CD8-positive, alpha-beta T cell (primary cell): ENCODE measurements at regions of chr18 and their contacts with region 1.

Region 1: GRCh38 chr18:50819728-50820378 is at the start of gene MRO:
- DNase-seq: peak; percentile 60 to 88 (median 79)
- ATAC-seq: peak; percentile 100
- H3K4me3 ChIP-seq: peak within 1 kb of the TSS; percentile 36 to 42
- H3K4me3 Mint-ChIP-seq: no peak within 1 kb of the TSS
- H3K27ac ChIP-seq: no peak within 1 kb of the TSS
- H3K27ac Mint-ChIP-seq: no peak within 1 kb of the TSS
- H3K4me1 ChIP-seq: peaks cover 20% of the 10 kb centered on the region
- H3K4me1 Mint-ChIP-seq: no peaks in the 10 kb centered on the region
- H3K27me3 ChIP-seq: no peaks in the 10 kb centered on the region
- H3K27me3 Mint-ChIP-seq: peaks cover 9% of the 10 kb centered on the region
- CTCF ChIP-seq: peak; percentile 93
- total RNA-seq, gene MRO: not detected

Region 2: DNA sequence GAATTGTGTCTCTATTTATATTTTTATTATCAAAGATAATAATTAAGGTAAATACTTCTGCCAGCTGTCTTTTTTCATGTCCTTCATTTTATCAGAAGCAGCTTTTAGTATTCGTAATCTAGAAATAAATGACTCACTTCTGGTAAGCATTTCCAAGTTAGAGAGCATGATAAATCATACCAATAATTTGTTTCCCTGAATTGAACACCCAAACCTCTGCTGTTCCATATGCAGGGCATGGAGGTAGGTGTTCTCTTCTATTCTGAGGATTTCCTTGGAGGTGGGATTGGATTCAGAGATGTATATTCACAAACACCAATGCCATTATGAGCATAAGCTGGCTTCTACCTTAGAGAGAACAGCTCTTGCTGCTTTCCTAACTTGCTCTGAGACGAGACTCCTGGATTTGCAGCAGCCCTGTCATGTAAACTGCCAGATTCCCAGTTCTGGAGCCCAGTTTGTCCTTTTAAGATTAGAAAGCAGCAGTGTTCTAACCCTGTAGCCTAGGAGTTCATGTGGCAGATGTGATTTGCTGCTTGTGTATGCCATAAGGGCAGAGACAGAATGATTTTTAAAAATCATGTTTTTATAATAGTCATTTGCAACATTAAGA is 397.5 kb before region 1 on chr18:
- CTCF ChIA-PET with region 1: no interaction called
- POLR2A ChIA-PET with region 1: no interaction called
- intact Hi-C with region 1: no loop called
- DNase-seq: no peak
- ATAC-seq: no peak
- H3K4me3 ChIP-seq: no peak overlapping the region
- H3K4me3 Mint-ChIP-seq: no peak overlapping the region
- H3K27ac ChIP-seq: no peak overlapping the region
- H3K27ac Mint-ChIP-seq: no peak overlapping the region
- H3K4me1 ChIP-seq: no peaks in the 10 kb centered on the region
- H3K4me1 Mint-ChIP-seq: no peaks in the 10 kb centered on the region
- H3K27me3 ChIP-seq: peaks cover 0 to 4% of the 10 kb centered on the region in 2 experiments
- H3K27me3 Mint-ChIP-seq: peaks cover 16% of the 10 kb centered on the region
- CTCF ChIP-seq: no peak

Region 3: DNA sequence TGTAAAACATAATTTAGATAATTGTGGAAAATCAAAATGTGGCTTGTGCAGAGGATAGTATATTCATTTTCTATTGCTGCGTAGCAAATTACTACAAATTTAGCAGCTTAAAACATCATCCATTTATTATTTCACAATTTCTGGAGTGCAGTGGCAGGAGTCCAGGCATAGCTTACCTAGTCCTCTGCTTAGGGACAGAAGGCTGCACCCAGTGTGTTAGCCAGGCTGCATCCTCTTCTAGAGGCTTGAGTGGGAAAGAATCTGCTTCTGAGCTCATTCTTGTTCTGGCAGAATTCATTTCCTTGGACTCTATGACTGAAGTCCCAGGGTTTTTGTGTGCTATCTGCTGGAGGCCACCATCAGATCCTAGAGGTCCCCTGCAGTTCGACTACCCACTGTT is 39.7 kb before region 1 on chr18:
- CTCF ChIA-PET with region 1: no interaction called
- POLR2A ChIA-PET with region 1: no interaction called
- intact Hi-C with region 1: no loop called
- DNase-seq: no peak
- ATAC-seq: no peak
- H3K4me3 ChIP-seq: no peak overlapping the region
- H3K4me3 Mint-ChIP-seq: no peak overlapping the region
- H3K27ac ChIP-seq: no peak overlapping the region
- H3K27ac Mint-ChIP-seq: no peak overlapping the region
- H3K4me1 ChIP-seq: no peaks in the 10 kb centered on the region
- H3K4me1 Mint-ChIP-seq: no peaks in the 10 kb centered on the region
- H3K27me3 ChIP-seq: no peaks in the 10 kb centered on the region
- H3K27me3 Mint-ChIP-seq: peaks cover 15% of the 10 kb centered on the region
- CTCF ChIP-seq: no peak

Region 4: DNA sequence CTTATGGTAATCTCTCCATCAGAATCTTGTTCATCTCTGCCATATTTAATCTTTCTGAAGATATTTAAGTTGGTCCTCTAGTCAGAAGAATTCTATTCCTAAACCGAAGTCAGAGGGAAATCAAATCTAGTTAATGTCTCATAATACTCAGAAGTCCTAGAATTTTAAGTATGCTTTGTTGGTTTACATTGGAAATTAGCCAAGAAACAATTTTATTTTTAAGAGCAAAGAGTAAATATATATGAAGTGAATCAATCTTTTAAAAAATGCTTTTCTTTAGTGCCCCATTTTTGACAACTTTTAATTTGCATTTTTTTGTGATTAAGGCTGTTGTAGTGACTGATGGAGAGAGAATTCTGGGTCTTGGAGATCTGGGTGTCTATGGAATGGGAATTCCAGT is 97.2 kb after region 1 on chr18:
- CTCF ChIA-PET with region 1: interaction called, 4 read pairs
- POLR2A ChIA-PET with region 1: no interaction called
- intact Hi-C with region 1: loop called (anchors 5 kb)
- DNase-seq: no peak
- ATAC-seq: no peak
- H3K4me3 ChIP-seq: no peak overlapping the region
- H3K4me3 Mint-ChIP-seq: no peak overlapping the region
- H3K27ac ChIP-seq: no peak overlapping the region
- H3K27ac Mint-ChIP-seq: no peak overlapping the region
- H3K4me1 ChIP-seq: no peaks in the 10 kb centered on the region
- H3K4me1 Mint-ChIP-seq: peaks cover 5% of the 10 kb centered on the region
- H3K27me3 ChIP-seq: no peaks in the 10 kb centered on the region
- H3K27me3 Mint-ChIP-seq: no peaks in the 10 kb centered on the region
- CTCF ChIP-seq: no peak

Region 5: DNA sequence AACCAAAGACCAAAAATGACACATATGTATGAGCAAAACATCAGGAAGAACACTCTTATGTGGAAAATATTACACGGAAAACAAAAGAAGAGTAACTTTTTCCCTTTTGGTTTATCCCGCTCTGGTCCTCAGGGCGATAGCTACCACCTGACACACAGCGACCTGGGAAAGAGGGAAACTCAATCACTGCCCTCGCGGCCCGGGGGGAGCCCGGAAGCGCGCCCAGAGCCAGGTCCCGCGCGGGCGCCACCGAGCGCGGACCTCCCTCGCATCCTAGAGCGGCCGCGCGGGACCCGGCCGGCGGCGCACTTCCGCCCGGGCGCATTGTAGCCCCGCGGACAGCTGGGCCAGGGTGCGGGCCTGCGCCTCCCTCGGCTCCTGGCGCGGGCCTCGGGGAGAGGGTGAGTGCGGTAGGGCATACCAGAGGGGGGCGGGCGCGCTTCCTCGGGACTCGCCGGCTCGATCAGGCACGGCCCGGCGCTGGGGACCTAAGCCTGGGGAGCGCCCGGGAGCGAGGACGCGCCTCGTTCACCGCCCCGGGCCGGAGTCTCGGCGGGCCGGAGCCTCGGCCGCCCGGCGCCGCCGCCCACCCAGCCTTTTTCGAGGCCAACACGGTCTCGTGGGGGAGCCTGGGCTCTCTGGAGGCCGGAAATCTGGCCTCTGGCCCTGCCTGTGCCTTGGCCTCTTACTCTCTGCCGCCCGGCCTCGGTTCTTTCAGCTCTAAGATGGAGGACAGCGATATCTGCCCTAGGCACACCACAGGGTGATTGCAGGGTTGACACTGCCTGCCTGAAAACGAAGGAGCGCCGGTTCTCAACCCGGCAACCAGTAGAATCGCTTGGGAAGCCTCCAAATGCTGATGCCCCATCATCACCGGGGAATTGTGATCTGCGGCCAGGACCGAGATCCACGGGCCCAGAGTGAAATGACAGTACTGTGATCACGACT is 148.1 kb after region 1 on chr18 and contains the start of gene ELAC1:
- CTCF ChIA-PET with region 1: no interaction called
- POLR2A ChIA-PET with region 1: no interaction called
- intact Hi-C with region 1: loop called in 1 of 2 experiments (anchors 1 kb)
- DNase-seq: peak; percentile 37 to 85 (median 64)
- ATAC-seq: peak; percentile 85
- H3K4me3 ChIP-seq: peak within 1 kb of the TSS; percentile 67 to 71
- H3K4me3 Mint-ChIP-seq: peak within 1 kb of the TSS; percentile 94
- H3K27ac ChIP-seq: peak within 1 kb of the TSS; percentile 86 to 89
- H3K27ac Mint-ChIP-seq: peak within 1 kb of the TSS; percentile 96
- H3K4me1 ChIP-seq: peaks cover 15% of the 10 kb centered on the region
- H3K4me1 Mint-ChIP-seq: peaks cover 28% of the 10 kb centered on the region
- H3K27me3 ChIP-seq: no peaks in the 10 kb centered on the region
- H3K27me3 Mint-ChIP-seq: no peaks in the 10 kb centered on the region
- CTCF ChIP-seq: no peak
- total RNA-seq, gene ELAC1: 3.5 to 4.0 TPM

Region 6: GRCh38 chr18:51039138-51040112 is 219.6 kb after region 1 on chr18:
- CTCF ChIA-PET with region 1: interaction called, 14 read pairs
- POLR2A ChIA-PET with region 1: no interaction called
- intact Hi-C with region 1: loop called in 1 of 2 experiments (anchors 5 kb)
- DNase-seq: peak in 2 of 9 experiments; percentile 13 to 40
- ATAC-seq: peak; percentile 66
- H3K4me3 ChIP-seq: no peak overlapping the region
- H3K4me3 Mint-ChIP-seq: peak overlapping the region; percentile 13
- H3K27ac ChIP-seq: peak overlapping the region in 1 of 2 experiments; percentile 4
- H3K27ac Mint-ChIP-seq: peak overlapping the region; percentile 73
- H3K4me1 ChIP-seq: peaks cover 79% of the 10 kb centered on the region
- H3K4me1 Mint-ChIP-seq: peaks cover 91% of the 10 kb centered on the region
- H3K27me3 ChIP-seq: no peaks in the 10 kb centered on the region
- H3K27me3 Mint-ChIP-seq: no peaks in the 10 kb centered on the region
- CTCF ChIP-seq: no peak